HepG2 (cell line): ENCODE measurements at regions of chr20 and their contacts with region 1.

Region 1: DNA sequence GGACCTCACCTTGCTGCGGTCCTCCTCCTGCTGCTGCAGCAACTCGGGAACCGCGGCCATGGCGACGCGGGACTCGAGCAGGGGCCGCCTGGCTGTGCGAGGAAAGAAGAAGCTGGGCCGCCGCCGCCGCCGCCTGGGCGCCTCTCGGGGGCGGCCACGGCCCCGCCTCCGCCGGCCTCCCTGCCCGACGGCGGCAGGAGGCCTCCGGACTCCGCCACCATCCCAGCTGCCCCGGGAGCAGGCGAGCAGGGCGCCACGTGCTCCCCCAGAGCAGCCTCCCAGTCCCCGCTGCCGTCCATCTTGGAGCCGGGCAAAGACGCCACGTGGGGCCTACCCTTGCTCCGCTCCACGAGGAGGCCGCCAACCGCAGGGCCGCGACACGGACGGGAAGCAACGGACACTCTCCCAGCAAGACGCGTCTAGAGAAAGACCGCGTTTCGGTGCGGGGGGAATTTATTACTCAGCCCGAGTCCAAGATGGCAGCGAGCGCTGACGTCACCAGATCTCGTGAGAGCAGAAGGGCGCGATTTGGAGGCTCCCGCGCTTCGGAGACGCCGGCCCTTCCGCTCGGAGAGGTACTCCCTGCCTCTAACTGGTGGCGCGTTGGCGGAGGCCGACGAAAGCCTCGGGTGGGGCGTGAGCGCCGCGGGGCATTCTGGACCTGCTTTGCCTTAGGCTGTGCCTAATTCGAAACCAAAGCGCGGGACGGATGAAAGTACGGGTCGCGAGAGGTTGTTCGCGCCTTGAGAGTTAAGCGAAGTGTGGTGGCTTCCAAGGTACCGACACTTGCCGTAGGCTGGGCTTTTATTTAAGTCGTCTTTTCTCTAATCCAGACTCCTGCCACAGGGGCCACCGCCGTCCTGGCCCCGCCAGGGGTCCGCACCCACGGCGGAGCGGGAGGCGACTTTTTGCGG is at the starts of genes MGME1 and SNX5:
- DNase-seq: peak; percentile 100
- ATAC-seq: peak; percentile 93
- H3K4me3 ChIP-seq: peak within 1 kb of the TSS; percentile 89 to 95 (median 89)
- H3K27ac ChIP-seq: peak within 1 kb of the TSS; percentile 97
- H3K4me1 ChIP-seq: peaks cover 52% of the 10 kb centered on the region
- H3K27me3 ChIP-seq: no peaks in the 10 kb centered on the region; a peak in 1 of 5 replicates
- CTCF ChIP-seq: peak; percentile 23
- EP300 ChIP-seq: peak; percentile 69 to 84; a peak in 3 of 4 replicates
- POLR2A ChIP-seq: peak; percentile 100
- RAD21 ChIP-seq: peak; percentile 74
- total RNA-seq, gene MGME1: 66.6 and 79.5 TPM in 2 replicates
- total RNA-seq, gene SNX5: 1,040 and 1,306 TPM in 2 replicates

Region 2: GRCh38 chr20:17925141-17925939 is 43.3 kb before region 1 on chr20:
- CTCF ChIA-PET with region 1: no interaction called
- POLR2A ChIA-PET with region 1: no interaction called
- in situ Hi-C with region 1: no loop called
- intact Hi-C with region 1: no loop called
- DNase-seq: no peak
- ATAC-seq: peak; percentile 29
- H3K4me3 ChIP-seq: 0 out of 6 replicates have a peak overlapping the region, but pooled peaks of 1 of the 3 experiments have one; percentile 13
- H3K27ac ChIP-seq: no peak overlapping the region
- H3K4me1 ChIP-seq: peaks cover 32% of the 10 kb centered on the region
- H3K27me3 ChIP-seq: peaks cover 8 to 36% of the 10 kb centered on the region in 2 experiments; a peak in 3 of 5 replicates
- CTCF ChIP-seq: no peak
- EP300 ChIP-seq: no peak
- POLR2A ChIP-seq: no peak
- RAD21 ChIP-seq: no peak

Region 3: DNA sequence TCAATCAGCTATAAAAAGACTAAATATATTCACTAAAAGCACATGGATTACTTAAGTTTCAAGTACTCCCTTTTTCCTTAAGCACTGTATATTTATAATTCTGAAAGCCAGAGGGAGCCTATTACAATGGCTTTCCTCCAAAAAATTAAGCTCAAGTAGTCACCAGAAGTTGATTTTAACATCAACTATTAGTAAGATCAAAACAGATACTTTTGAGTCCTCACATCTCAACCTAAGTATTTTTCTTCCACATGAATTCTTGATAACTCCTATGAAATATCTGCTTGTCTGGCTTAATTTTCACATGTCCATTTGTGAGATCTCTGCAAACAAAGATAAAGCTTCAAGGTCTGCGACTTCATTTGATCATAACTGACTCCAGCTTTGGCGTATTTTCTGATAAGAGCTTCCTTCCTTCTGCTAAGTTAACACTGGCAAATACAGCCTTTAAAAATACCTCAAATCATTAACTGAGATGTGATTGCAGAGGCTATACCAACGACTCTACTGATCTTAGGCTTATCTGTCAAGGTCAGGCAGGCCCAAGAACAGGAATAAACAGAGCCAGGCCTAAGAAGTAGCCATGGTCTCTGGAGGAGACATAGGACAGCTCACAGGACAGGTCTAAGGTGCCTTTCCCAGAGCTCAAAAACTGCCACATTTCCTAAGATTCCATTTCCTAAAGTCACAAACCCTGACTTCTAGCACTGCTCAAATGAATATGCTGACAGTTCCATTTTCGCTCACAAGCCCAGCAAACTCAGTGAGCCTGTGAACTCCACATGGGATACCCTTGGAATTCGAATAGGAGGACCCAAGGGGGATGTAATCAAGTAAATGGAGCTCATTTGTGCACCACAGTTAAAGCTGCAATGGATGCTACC is 10.0 kb before region 1 on chr20:
- CTCF ChIA-PET with region 1: interaction called, 3 read pairs
- POLR2A ChIA-PET with region 1: interaction called, 114 read pairs
- in situ Hi-C with region 1: no loop called
- intact Hi-C with region 1: loop called (anchors 1 kb)
- DNase-seq: peak; percentile 88
- ATAC-seq: peak; percentile 17
- H3K4me3 ChIP-seq: peak overlapping the region; percentile 11 to 58 (median 18); a peak in 5 of 6 replicates
- H3K27ac ChIP-seq: peak overlapping the region; percentile 97
- H3K4me1 ChIP-seq: peaks cover 100% of the 10 kb centered on the region
- H3K27me3 ChIP-seq: no peaks in the 10 kb centered on the region
- CTCF ChIP-seq: no peak
- EP300 ChIP-seq: peak in 1 of 2 experiments; percentile 88; a peak in 2 of 4 replicates
- POLR2A ChIP-seq: peak; percentile 43 to 54; a peak in 3 of 4 replicates
- RAD21 ChIP-seq: no peak

Region 4: GRCh38 chr20:17985388-17986018 is 16.9 kb after region 1 on chr20:
- CTCF ChIA-PET with region 1: no interaction called
- POLR2A ChIA-PET with region 1: interaction called, 34 read pairs
- in situ Hi-C with region 1: no loop called
- intact Hi-C with region 1: loop called (anchors 1 kb)
- DNase-seq: peak; percentile 98
- ATAC-seq: peak; percentile 99
- H3K4me3 ChIP-seq: no peak overlapping the region; a peak in 1 of 6 replicates
- H3K27ac ChIP-seq: peak overlapping the region; percentile 51
- H3K4me1 ChIP-seq: peaks cover 38% of the 10 kb centered on the region
- H3K27me3 ChIP-seq: no peaks in the 10 kb centered on the region
- CTCF ChIP-seq: peak; percentile 18
- EP300 ChIP-seq: peak; percentile 89 to 95; a peak in 3 of 4 replicates
- POLR2A ChIP-seq: 0 out of 4 replicates have a peak, but pooled peaks of 1 of the 2 experiments have one; percentile 24
- RAD21 ChIP-seq: peak; percentile 52